Transverse colon (tissue), 4 donors: ENCODE measurements at regions of chr2 and their contacts with region 1.

Region 1: DNA sequence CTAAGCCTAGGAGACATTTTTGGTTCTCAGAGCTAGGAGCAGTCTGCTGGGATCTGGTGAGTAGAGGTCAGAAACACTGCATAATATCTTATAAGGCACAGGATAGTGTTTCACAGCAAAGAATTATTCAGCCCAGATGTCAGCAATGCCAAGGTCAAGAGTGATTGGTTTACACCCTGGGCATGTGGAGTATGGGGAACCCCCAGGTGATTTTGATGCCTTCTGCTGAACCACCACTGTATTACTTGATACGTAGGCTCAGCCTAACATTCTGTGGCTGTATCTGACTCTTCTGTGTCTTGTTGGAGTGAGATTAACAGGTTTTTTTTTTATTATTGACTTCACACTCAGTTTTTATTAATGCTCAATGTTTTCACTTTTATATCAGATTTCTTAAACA is 6.0 kb downstream of the DDX18 start:
- DNase-seq: no peak
- H3K4me3 ChIP-seq: no peak overlapping the region
- H3K27ac ChIP-seq: no peak overlapping the region
- H3K4me1 ChIP-seq: peaks cover 7 to 16% (median 12%) of the 10 kb centered on the region in 4 donors
- H3K27me3 ChIP-seq: no peaks in the 10 kb centered on the region
- CTCF ChIP-seq: no peak
- EP300 ChIP-seq: no peak
- POLR2A ChIP-seq: no peak

Region 2: DNA sequence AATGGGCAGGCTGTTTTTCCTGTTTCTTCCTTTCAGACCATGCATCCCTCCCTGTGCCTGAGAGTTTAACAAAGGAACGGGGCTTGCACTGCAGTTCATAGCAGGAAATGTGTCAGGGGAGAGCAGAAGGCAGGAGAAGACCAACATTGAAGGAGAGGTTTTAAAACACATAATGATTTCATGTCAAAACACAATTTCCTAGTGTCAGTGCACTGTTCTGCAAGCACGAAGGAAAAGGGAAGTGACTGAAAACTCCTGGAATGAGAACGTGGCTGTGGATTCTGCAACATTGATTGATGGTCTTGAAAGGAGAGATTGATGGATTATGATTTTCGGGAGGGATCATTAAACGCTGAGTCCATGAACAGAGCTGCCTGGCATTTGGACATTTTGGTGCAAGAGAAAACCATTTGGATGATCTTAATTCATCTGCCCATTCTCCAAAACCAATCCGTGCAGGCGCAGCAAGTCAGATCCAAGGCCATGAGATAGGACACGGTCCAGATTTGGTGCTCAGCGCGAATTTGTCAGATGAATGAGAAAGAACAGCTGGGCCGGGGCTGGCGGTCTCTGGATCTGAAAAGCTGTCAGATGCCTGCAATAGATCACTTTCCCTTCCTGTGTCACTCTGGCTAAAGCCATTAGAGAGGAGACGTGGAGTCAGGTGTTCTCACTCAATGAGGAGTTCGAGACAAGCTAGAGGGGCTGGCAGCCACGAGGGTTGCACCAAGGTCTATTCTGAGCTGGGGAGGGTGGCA is 1299.7 kb after region 1 on chr2:
- in situ Hi-C with region 1: no loop called
- intact Hi-C with region 1: loop called (anchors 5 kb)
- DNase-seq: no peak
- H3K4me3 ChIP-seq: no peak overlapping the region
- H3K27ac ChIP-seq: no peak overlapping the region
- H3K4me1 ChIP-seq: no peaks in the 10 kb centered on the region
- H3K27me3 ChIP-seq: peaks cover 17% of the 10 kb centered on the region
- CTCF ChIP-seq: no peak
- EP300 ChIP-seq: no peak
- POLR2A ChIP-seq: no peak